HAP-1 (cell line): ENCODE measurements at regions of chr14 and their contacts with region 1.

Region 1: DNA sequence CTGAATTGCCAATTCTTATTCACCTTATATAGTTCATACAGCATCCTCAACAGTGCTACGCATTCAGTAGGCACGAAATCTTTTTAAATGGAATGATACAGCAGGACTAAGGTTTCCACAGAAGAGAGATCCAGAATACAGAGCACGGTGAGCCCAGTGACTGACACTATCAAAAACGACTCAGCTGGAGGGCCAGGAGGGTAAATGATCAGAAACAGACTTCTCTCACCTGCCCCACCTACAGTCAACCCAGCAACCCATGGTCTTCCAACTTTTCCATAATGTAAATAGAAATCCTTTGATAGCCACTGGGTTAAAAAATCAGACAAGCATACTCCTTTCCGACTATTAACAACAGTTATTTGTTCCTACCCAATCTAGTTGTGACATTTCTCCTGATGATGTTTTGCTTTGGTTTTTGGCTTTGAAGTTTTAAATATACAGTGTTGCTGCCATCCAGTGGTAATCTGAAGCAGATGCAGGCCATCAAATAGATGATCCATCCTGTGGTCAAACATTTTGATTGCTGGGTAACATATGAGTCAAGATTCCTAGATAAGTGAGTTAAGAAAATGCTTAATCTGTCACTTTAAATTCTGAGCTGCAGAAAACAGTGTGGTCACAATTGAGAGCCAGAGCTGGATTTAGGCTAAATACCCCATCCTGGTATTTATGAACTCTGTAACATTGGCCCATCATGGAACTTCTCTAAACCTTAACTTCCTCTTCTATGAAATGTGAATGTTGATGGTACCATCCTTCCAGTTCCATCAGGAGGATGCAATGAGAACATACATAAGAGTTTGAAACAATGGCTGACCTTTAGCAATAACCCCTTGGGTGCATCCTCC is 42.0 kb downstream of the GPHB5 start:
- DNase-seq: peak in 1 of 2 experiments; percentile 55
- H3K4me3 ChIP-seq: no peak overlapping the region
- H3K4me1 ChIP-seq: no peaks in the 10 kb centered on the region
- H3K27me3 ChIP-seq: 0 out of 2 replicates have a peak, but pooled peaks cover 3% of the 10 kb centered on the region

Region 2: DNA sequence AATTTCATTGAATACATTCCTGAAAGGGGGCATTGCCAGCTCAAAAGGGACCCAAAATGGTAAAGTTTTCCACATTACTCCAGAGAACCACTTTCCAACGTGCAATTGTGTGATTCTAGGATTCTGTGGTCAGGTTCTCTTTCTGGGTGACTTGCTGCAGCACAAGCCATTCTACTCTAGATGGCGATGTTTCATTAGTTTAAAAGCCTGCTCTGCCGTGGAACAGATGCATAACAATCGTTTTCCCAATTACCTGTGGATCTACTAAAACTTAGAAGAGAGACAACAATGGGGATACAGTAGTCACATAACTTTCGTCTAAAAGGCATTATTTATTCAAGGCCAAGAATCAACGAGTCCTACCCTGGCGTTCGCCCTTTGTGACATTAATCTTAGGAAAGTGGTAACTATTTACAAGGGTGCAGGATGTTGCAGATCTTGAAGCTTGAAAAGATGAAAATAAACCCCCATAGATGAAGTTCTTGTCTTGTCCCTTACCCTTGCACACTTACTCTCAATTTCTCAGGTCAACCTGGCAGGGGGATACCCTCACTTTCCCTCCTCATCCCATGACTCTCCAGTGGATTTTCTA is 1113.6 kb before region 1 on chr14:
- in situ Hi-C with region 1: loop called (anchors 10 kb)
- DNase-seq: peak; percentile 36 to 41
- H3K4me3 ChIP-seq: no peak overlapping the region
- H3K4me1 ChIP-seq: no peaks in the 10 kb centered on the region
- H3K27me3 ChIP-seq: no peaks in the 10 kb centered on the region

Region 3: DNA sequence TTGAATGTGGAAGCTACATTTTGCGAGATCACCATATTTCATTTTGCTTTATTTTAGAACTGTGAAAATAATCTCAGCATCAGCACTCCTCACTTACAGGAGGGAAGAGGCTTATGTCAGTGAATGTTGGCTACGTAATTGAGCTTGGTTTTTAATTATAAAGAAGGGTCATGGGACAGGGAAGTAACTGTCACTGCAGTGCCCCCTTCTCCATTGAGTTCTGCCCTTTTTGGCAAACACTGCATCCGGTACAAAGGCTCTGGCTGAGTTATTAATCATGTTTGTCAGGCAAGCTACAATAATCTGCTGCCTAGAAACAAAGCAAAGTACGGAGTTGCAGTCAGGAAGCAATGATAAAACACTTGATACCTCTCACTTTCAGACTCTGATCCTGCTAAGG is 967.8 kb before region 1 on chr14:
- in situ Hi-C with region 1: no loop called
- DNase-seq: no peak
- H3K4me3 ChIP-seq: no peak overlapping the region
- H3K4me1 ChIP-seq: no peaks in the 10 kb centered on the region
- H3K27me3 ChIP-seq: no peaks in the 10 kb centered on the region

Region 4: GRCh38 chr14:63174760-63175211 is 101.9 kb before region 1 on chr14:
- in situ Hi-C with region 1: loop called (anchors 10 kb)
- DNase-seq: peak; percentile 34 to 53
- H3K4me3 ChIP-seq: no peak overlapping the region
- H3K4me1 ChIP-seq: peaks cover 4% of the 10 kb centered on the region
- H3K27me3 ChIP-seq: no peaks in the 10 kb centered on the region